Calu3 (cell line): ENCODE measurements at regions of chr1 and their contacts with region 1.

Region 1: GRCh38 chr1:75519651-75520427 is 91.1 kb downstream of the SLC44A5 start:
- DNase-seq: no peak
- H3K4me3 Mint-ChIP-seq: no peak overlapping the region
- H3K27ac Mint-ChIP-seq: no peak overlapping the region
- H3K4me1 Mint-ChIP-seq: no peaks in the 10 kb centered on the region
- H3K27me3 Mint-ChIP-seq: no peaks in the 10 kb centered on the region
- CTCF ChIP-seq: no peak

Region 2: DNA sequence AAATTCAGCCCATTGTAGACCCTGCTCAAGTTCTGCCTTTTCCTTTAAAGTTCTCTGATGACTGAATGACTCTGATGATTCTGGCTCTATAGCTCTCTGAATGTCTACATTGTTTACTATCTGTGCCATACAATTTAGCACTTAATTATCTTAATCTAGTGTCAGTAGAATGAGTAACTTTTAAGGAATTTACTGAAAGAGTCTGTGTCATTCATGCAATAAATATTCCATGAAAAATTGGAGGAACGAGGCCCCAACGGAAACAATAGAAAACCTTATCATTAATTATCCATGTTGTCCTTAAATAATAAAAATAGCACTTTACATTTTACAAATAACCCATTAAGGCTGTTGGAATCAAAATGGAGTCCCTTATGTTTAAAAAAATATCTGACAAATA is 13.2 kb after region 1 on chr1:
- CTCF ChIA-PET with region 1: no interaction called
- intact Hi-C with region 1: loop called (anchors 2 kb)
- DNase-seq: no peak
- H3K4me3 Mint-ChIP-seq: no peak overlapping the region
- H3K27ac Mint-ChIP-seq: no peak overlapping the region
- H3K4me1 Mint-ChIP-seq: no peaks in the 10 kb centered on the region
- H3K27me3 Mint-ChIP-seq: no peaks in the 10 kb centered on the region
- CTCF ChIP-seq: no peak